Activated CD8-positive, alpha-beta T cell treated with anti-CD3 and anti-CD28 coated beads, Interleukin-2, amount 10 ng/mL, durations not matched to agents 7 days and 5 days (primary cell): ENCODE measurements at regions of chr11 and their contacts with region 1.

Region 1: DNA sequence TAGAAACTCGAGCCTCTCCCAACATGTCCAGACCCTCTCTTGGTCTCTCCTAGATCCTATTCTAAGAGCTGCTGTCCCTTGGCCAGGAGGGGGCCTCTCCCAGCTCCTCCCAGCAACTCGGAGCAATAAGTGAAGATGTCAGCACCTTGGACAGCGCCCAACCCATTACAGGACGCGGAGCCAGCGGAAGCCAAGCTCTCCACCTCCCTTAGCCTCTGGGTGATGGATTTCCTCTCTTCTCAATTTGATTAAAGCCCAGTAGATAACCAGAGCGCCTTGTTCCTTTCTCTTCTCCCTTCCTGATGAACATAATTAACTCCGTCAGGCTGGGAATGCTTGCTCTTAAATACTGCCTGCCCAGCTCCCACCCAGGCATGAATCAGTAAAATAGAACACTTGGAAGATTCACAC is 26.2 kb upstream of the TPBGL start:
- DNase-seq: peak; percentile 93
- ATAC-seq: peak; percentile 87
- H3K4me3 Mint-ChIP-seq: no peak overlapping the region
- H3K27ac Mint-ChIP-seq: no peak overlapping the region
- H3K4me1 Mint-ChIP-seq: no peaks in the 10 kb centered on the region
- H3K27me3 Mint-ChIP-seq: peaks cover 27% of the 10 kb centered on the region

Region 2: DNA sequence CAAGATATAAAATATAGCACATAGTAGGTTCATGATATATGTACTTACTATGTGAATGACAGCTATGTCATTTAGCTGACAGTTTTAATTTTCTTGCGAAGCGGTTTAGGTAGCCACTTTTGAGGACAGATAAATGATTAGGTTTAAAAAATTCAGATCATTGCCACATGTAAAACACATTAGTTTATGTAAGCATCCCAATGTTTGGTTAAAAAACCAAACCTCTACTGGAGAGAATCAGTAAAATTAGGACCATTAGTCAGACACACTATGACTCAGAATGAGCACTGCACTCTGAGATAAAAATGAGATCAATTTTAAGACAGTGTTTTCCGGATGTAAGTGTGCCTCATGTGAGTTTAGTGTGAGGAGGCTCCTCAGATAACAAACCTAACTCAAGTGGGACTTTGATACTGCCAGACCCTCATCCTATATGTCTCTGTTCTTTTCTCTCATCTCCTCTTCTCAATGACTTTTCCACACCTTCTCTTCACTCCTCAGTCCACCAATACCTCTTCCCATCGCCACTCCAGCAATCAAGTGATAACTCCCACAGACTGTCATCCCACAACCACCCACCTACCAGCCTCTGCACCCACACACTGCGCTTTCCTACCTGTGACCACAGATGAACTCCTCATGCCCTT is 110.9 kb before region 1 on chr11:
- CTCF ChIA-PET with region 1: no interaction called
- POLR2A ChIA-PET with region 1: no interaction called
- DNase-seq: no peak
- ATAC-seq: no peak
- H3K4me3 Mint-ChIP-seq: no peak overlapping the region
- H3K27ac Mint-ChIP-seq: no peak overlapping the region
- H3K4me1 Mint-ChIP-seq: peaks cover 3% of the 10 kb centered on the region
- H3K27me3 Mint-ChIP-seq: peaks cover 18% of the 10 kb centered on the region

Region 3: DNA sequence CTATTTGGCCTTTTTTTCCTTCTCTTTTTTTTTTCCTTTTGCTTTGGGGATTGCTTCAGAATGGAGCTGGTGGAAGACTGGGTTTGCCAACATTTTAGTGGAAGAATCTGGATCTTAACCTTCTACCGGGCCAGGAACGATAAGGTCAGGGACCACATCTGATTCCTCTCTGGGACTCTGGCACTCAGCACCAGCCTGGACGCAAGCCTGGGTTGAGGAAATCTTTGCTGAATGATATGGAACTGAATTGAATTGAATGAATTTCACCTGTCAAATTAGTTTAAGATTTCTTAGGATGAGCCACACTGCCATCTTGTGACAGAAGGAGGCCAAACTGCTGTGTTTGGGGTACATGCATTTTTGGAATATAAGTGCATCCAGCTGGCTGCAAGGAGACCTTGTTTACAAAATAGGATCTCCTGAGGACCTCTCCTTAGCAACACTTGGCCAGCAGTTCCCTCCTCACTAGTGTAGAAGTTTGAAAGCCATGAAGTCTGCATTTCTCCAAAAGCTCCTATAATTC is 56.5 kb after region 1 on chr11:
- CTCF ChIA-PET with region 1: interaction called, 10 read pairs
- POLR2A ChIA-PET with region 1: no interaction called
- DNase-seq: peak; percentile 37
- ATAC-seq: no peak
- H3K4me3 Mint-ChIP-seq: no peak overlapping the region
- H3K27ac Mint-ChIP-seq: peak overlapping the region; percentile 72
- H3K4me1 Mint-ChIP-seq: peaks cover 25% of the 10 kb centered on the region
- H3K27me3 Mint-ChIP-seq: no peaks in the 10 kb centered on the region

Region 4: GRCh38 chr11:75342903-75343870 is 128.8 kb after region 1 on chr11:
- CTCF ChIA-PET with region 1: no interaction called
- POLR2A ChIA-PET with region 1: no interaction called
- DNase-seq: no peak
- ATAC-seq: no peak
- H3K4me3 Mint-ChIP-seq: no peak overlapping the region
- H3K27ac Mint-ChIP-seq: peak overlapping the region; percentile 73
- H3K4me1 Mint-ChIP-seq: peaks cover 99% of the 10 kb centered on the region
- H3K27me3 Mint-ChIP-seq: no peaks in the 10 kb centered on the region